Caco-2 (cell line): ENCODE measurements at regions of chr10 and their contacts with region 1.

Region 1: DNA sequence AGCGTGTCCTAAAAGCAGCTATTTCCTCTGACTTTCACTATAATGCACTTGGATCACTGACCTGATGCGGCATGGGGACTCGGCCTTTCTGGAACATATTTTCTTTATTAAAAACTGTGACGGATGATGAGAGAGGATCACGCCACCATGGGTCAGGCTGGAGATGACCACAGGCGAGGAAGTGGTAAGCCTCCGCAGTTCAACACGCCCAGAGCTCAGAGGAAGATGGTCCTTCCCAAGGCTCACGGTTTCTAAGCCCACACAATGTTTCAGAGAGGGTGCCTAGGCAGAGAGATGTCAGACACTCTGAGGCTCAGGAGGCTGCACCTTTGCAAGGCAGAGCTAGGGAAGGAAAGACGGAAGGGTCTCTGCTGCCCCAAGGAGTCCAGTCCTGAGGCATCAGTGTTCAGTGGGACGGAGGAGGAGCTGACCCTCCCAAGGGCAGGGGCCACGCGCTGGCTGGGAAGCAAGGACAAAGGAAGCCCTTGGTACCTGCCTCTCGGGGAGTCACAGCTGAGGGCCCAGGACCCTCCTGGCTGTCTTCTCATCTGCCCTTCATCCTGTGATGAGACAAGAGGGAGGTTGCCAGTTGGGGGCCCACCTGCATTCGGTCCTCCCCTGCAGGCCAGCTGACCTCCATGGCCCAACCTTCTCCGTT is 9.5 kb downstream of the CHST15 start:
- DNase-seq: no peak
- H3K4me3 ChIP-seq: no peak overlapping the region
- H3K4me3 Mint-ChIP-seq: no peak overlapping the region
- H3K27ac Mint-ChIP-seq: no peak overlapping the region
- H3K4me1 ChIP-seq: no peaks in the 10 kb centered on the region
- H3K4me1 Mint-ChIP-seq: peaks cover 6% of the 10 kb centered on the region
- H3K27me3 ChIP-seq: no peaks in the 10 kb centered on the region
- H3K27me3 Mint-ChIP-seq: no peaks in the 10 kb centered on the region
- CTCF ChIP-seq: no peak

Region 2: DNA sequence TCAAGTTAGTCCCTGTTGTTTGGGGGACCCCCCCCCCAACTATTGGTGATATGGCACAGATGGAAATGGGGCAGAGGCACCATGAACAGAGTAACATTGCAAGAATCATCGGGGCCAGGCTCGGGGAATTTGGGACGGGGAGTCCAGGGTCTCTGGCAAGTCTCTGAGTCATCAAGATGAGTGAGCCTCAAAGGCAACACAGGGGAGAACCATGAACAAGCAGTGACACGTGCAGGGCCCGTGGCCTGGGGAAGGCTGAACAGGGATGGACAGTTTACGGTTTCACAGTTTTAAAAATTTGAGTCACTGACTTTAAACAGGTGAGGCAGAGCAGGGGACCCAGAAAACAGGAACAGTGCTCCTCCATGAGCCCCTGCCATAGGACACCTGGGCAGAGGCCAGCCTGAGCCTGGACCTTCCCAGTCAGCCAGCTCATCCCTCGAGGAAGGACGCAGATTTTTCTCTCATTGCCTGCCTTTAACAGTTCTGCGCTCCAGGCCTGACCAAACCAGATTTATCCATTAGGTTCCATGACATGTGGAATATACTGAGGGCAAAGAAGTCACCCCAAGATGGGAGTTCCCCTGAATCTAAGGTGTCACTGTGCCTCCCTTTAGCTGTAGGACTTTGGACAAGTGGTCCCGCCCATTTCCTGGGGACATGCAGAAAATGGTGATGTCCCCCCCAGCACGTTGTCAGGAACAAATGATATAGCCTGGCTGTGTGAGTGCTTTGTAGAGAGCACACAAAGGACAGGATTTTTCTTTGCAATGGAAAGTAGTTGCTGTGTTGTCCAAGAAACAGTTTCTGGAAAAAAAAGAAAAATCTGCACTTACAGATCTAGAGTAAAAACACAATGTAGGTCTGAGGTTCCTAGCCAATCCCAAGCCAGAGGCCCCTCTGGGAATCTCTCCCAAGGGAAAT is 14.3 kb before region 1 on chr10:
- CTCF ChIA-PET with region 1: no interaction called
- POLR2A ChIA-PET with region 1: no interaction called
- intact Hi-C with region 1: loop called (anchors 2 kb)
- DNase-seq: no peak
- H3K4me3 ChIP-seq: no peak overlapping the region
- H3K4me3 Mint-ChIP-seq: no peak overlapping the region
- H3K27ac Mint-ChIP-seq: no peak overlapping the region
- H3K4me1 ChIP-seq: peaks cover 16% of the 10 kb centered on the region
- H3K4me1 Mint-ChIP-seq: peaks cover 13% of the 10 kb centered on the region
- H3K27me3 ChIP-seq: no peaks in the 10 kb centered on the region
- H3K27me3 Mint-ChIP-seq: peaks cover 2% of the 10 kb centered on the region
- CTCF ChIP-seq: no peak

Region 3: GRCh38 chr10:124240839-124241291 is 157.0 kb after region 1 on chr10:
- CTCF ChIA-PET with region 1: no interaction called
- POLR2A ChIA-PET with region 1: no interaction called
- intact Hi-C with region 1: no loop called
- DNase-seq: no peak
- H3K4me3 ChIP-seq: no peak overlapping the region
- H3K4me3 Mint-ChIP-seq: no peak overlapping the region
- H3K27ac Mint-ChIP-seq: peak overlapping the region; percentile 43
- H3K4me1 ChIP-seq: no peaks in the 10 kb centered on the region
- H3K4me1 Mint-ChIP-seq: no peaks in the 10 kb centered on the region
- H3K27me3 ChIP-seq: no peaks in the 10 kb centered on the region
- H3K27me3 Mint-ChIP-seq: peaks cover 8% of the 10 kb centered on the region
- CTCF ChIP-seq: no peak